ENCODE measurements at regions of chr4 and their contacts with region 1.

Region 1: DNA sequence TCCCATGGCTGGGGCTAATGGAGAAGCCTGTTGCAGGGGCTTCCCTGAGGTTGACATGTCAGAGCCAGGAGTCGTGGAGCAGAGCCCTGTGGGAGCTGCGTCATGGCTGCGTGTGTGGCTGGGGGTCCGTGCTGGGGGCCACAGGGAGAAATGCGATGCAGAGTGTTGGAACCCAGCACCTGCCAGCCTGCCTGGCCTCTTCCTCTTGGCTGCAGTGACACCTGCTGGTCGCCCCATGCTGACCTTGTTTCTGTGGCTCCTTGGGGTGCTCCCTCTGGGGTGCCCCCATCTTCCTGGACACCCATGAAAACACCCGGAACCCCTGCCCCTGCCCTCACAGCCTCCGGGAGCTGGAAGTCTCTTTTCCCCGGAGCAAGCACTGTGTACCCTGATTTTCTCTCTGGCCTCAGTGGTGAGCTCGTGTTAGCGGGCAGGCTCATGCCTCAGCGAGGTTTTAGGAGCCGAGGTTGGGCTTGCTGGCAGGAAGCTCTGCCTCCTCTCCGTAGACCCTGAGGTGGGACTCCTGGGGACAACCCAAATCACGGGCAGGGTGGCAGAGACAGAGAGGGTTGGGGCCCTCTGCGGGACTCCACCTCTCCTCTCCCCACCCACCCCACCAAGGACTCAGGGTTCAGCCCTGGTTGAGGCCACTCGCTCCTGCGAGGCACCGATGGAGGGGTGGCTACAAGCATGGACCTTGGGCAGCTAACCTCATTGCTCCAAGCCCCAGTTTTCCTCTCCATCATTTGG is 103.7 kb downstream of the SORCS2 start:
- DNase-seq: peak; percentile 82
- H3K4me3 ChIP-seq: no peak overlapping the region
- H3K27ac ChIP-seq: no peak overlapping the region
- H3K4me1 ChIP-seq: no peaks in the 10 kb centered on the region; a peak in 1 of 4 replicates
- H3K27me3 ChIP-seq: no peaks in the 10 kb centered on the region
- CTCF ChIP-seq: peak; percentile 69
- EP300 ChIP-seq: no peak
- RAD21 ChIP-seq: peak; percentile 88

Region 2: DNA sequence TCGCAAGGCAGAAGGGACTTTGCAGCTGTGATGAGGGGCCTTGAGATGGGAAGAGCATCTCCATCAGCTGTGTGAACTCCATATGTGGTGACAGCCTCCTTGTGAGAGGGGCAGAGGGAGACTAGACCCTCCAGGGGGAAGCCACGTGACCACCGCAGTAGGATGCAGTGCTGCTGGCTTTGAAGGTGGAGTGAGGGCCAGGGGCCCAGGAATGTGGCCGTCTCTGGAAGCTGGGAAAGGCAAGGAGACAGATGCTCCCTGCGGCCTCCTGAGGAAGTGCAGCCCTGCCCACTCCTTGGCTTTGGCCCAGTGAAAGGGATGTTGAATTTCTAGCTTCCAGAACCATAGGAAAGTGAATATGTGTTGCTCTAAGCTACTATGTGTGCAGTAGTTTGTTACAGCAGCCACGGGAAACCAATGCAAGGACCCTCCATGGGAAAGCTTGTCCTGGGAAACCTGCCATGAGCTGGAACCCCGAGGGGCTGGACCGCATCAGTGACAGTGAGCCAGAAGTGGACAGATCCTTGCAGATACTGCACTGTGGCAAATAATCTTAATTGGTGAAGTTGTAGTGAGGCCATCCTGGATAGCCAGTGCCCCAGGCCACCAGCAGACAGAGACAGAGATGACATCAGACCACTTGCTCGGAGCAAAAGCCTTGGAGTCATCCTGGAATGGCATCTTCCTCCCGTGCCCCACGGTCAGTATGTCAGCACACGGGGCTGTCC is 139.2 kb before region 1 on chr4:
- CTCF ChIA-PET with region 1: interaction called, 18 read pairs
- POLR2A ChIA-PET with region 1: no interaction called
- DNase-seq: peak; percentile 76
- H3K4me3 ChIP-seq: no peak overlapping the region
- H3K27ac ChIP-seq: no peak overlapping the region
- H3K4me1 ChIP-seq: peaks cover 0 to 20% of the 10 kb centered on the region in 2 experiments; a peak in 2 of 4 replicates
- H3K27me3 ChIP-seq: peaks cover 30% of the 10 kb centered on the region
- CTCF ChIP-seq: peak; percentile 48
- EP300 ChIP-seq: peak in 1 of 2 experiments; percentile 45; a peak in 1 of 4 replicates
- RAD21 ChIP-seq: no peak

Region 3: GRCh38 chr4:7186061-7186461 is 110.0 kb before region 1 on chr4:
- CTCF ChIA-PET with region 1: interaction called, 301 read pairs
- POLR2A ChIA-PET with region 1: no interaction called
- DNase-seq: peak; percentile 73
- H3K4me3 ChIP-seq: no peak overlapping the region
- H3K27ac ChIP-seq: no peak overlapping the region
- H3K4me1 ChIP-seq: no peaks in the 10 kb centered on the region
- H3K27me3 ChIP-seq: peaks cover 32% of the 10 kb centered on the region
- CTCF ChIP-seq: 0 out of 2 replicates have a peak, but pooled peaks have one; percentile 23
- EP300 ChIP-seq: no peak
- RAD21 ChIP-seq: peak; percentile 54

Region 4: GRCh38 chr4:7261087-7261486 is 35.0 kb before region 1 on chr4:
- CTCF ChIA-PET with region 1: interaction called, 11 read pairs
- POLR2A ChIA-PET with region 1: no interaction called
- DNase-seq: no peak
- H3K4me3 ChIP-seq: no peak overlapping the region
- H3K27ac ChIP-seq: no peak overlapping the region
- H3K4me1 ChIP-seq: peaks cover 0 to 28% of the 10 kb centered on the region in 2 experiments; a peak in 2 of 4 replicates
- H3K27me3 ChIP-seq: no peaks in the 10 kb centered on the region
- CTCF ChIP-seq: no peak
- EP300 ChIP-seq: no peak
- RAD21 ChIP-seq: no peak

Region 5: GRCh38 chr4:7280926-7281690 is 15.0 kb before region 1 on chr4:
- CTCF ChIA-PET with region 1: interaction called, 49 read pairs
- POLR2A ChIA-PET with region 1: no interaction called
- DNase-seq: no peak
- H3K4me3 ChIP-seq: no peak overlapping the region
- H3K27ac ChIP-seq: no peak overlapping the region
- H3K4me1 ChIP-seq: peaks cover 0 to 21% of the 10 kb centered on the region in 2 experiments; a peak in 1 of 4 replicates
- H3K27me3 ChIP-seq: no peaks in the 10 kb centered on the region
- CTCF ChIP-seq: no peak
- EP300 ChIP-seq: no peak
- RAD21 ChIP-seq: no peak

Region 6: DNA sequence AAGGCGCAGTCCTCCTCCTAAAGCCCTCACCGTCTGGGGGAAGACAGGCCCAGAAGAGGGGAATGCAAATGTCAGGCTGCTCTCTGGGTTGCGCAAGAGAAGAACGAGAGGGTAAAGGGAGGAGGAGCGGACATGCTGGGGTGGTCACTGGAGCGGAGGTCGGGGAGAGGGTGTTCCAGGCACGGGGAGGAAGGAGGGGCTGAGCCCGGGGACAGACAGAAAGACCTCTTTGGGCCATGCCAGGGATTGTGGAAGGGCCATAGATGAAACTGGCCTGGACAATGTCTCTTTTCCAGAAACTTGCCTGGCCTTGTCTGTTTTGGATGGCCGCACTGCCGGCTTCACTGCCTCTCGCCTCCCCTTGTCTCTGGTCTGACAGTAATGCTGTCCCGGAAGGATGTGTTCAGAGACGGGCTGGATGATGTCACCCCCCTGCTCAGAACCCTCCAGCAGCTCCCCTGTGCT is 17.3 kb after region 1 on chr4:
- CTCF ChIA-PET with region 1: interaction called, 14 read pairs
- POLR2A ChIA-PET with region 1: no interaction called
- DNase-seq: no peak
- H3K4me3 ChIP-seq: no peak overlapping the region
- H3K27ac ChIP-seq: no peak overlapping the region
- H3K4me1 ChIP-seq: no peaks in the 10 kb centered on the region
- H3K27me3 ChIP-seq: 0 out of 2 replicates have a peak, but pooled peaks cover 5% of the 10 kb centered on the region
- CTCF ChIP-seq: no peak
- EP300 ChIP-seq: no peak
- RAD21 ChIP-seq: no peak

Region 7: GRCh38 chr4:7381221-7381889 is 85.3 kb after region 1 on chr4:
- CTCF ChIA-PET with region 1: no interaction called
- POLR2A ChIA-PET with region 1: no interaction called
- DNase-seq: no peak
- H3K4me3 ChIP-seq: no peak overlapping the region
- H3K27ac ChIP-seq: no peak overlapping the region
- H3K4me1 ChIP-seq: peaks cover 0 to 16% of the 10 kb centered on the region in 2 experiments; a peak in 1 of 4 replicates
- H3K27me3 ChIP-seq: no peaks in the 10 kb centered on the region; the same call in 1 of the 2 replicates
- CTCF ChIP-seq: no peak
- EP300 ChIP-seq: no peak
- RAD21 ChIP-seq: no peak

Region 8: DNA sequence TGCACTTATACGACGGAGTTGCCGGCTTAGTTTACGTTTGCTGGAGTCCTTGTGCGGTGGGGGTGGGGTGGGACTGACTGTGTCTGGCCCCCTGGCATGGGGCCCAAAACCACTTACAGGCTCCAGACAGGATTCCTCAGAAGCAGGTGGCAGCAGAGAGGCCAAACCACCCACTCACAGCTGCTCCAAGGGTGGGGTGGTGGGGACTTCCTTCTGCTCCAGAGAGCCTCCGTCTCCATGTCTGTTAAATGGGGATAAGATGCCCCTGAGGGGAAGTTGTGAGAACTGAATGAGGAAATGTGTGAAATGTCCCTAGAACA is 102.0 kb after region 1 on chr4:
- CTCF ChIA-PET with region 1: no interaction called
- POLR2A ChIA-PET with region 1: no interaction called
- DNase-seq: peak; percentile 76
- H3K4me3 ChIP-seq: no peak overlapping the region
- H3K27ac ChIP-seq: no peak overlapping the region
- H3K4me1 ChIP-seq: peaks cover 0 to 14% of the 10 kb centered on the region in 2 experiments; a peak in 2 of 4 replicates
- H3K27me3 ChIP-seq: peaks cover 19% of the 10 kb centered on the region; the same call in 1 of the 2 replicates
- CTCF ChIP-seq: no peak; the same call in 1 of the 2 replicates
- EP300 ChIP-seq: peak; percentile 14 to 58; a peak in 2 of 4 replicates
- RAD21 ChIP-seq: peak; percentile 34

Measured in SK-N-SH (cell line).